ENCODE measurements at regions of chr11 and their contacts with region 1.

Region 1: GRCh38 chr11:82867495-82868082 is 32.6 kb downstream of the PRCP start:
- DNase-seq: no peak
- ATAC-seq: peak; percentile 53

Region 2: GRCh38 chr11:82718307-82718706 is 149.3 kb before region 1 on chr11:
- intact Hi-C with region 1: loop called (anchors 10 kb)
- DNase-seq: no peak
- ATAC-seq: peak; percentile 79

Region 3: DNA sequence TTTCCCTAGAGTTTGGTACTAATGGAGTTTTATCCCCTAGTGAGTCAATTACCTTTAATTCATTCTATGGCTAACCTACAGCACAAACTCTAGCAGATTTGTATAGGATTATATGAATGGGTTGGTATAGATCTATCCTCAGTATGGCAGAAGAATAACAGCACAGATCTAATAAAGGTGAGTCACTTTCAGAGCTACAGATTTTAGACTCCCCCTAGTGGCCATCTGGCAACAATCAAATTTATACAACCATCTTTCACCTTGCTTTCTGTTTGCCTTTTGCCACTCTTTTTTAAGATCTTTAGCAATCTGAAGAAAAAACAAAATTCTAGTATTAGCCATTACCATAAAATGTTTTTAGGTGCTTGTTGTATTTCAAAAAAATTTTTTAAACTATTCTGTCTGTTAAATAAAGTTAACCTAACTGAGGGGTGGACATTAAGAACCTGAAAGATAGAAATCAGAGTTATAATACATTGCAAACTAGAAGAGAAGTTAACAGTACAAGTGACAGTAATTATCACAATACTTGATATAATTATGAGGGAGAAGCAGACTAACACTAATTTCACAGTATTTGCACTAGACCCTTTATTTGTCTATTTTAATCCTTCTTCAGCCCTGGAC is 59.8 kb after region 1 on chr11:
- intact Hi-C with region 1: no loop called
- DNase-seq: no peak
- ATAC-seq: peak; percentile 57

Region 4: GRCh38 chr11:83349296-83349695 is 481.7 kb after region 1 on chr11:
- intact Hi-C with region 1: no loop called
- DNase-seq: no peak
- ATAC-seq: no peak

Measured in Right ventricle myocardium superior (tissue), 1 donor.